CD8-positive, alpha-beta T cell (primary cell): ENCODE measurements at regions of chr15 and their contacts with region 1.

Region 1: DNA sequence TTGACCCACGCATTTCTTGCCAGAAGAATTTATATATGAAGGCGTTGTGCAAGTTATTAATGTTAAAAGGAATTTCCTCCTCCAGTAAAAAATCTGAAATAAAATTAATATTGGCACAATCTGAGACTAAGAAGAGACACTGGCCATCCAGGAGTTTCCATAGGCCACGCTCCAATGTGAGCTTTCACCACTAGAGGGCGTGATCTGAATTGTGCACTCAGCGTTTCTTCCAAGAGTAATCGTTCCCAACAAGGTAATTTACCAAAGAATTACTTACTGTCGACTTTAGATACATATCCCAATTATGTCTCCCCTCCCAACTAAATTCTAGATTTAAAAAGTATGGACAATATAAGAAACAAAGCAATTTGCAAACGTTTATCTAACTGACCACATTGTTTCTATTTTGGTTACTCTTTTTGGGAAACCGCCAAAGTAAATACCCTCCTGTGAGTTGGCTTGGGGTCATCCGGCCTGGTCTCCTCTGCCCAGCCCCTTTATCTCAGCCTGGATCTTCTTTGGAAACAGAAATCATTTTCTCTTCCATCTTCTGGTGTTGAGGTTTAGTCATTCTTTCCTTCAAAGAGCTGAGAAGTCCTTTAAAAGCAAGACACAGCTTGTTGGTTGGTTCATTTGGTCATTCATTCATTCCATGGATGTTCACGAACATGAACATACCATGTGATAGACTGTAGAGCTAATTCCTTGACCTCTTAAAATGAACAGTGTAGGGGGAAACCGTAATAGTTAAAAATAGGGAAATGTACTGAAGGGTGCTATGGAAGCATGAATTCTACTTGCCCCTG is 26.2 kb downstream of the POLR2M start:
- DNase-seq: peak in 8 of 9 experiments; percentile 17 to 61 (median 50)
- ATAC-seq: no peak
- H3K4me3 ChIP-seq: no peak overlapping the region
- H3K4me3 Mint-ChIP-seq: no peak overlapping the region
- H3K27ac ChIP-seq: no peak overlapping the region
- H3K27ac Mint-ChIP-seq: no peak overlapping the region
- H3K4me1 ChIP-seq: no peaks in the 10 kb centered on the region
- H3K4me1 Mint-ChIP-seq: peaks cover 8% of the 10 kb centered on the region
- H3K27me3 ChIP-seq: no peaks in the 10 kb centered on the region
- H3K27me3 Mint-ChIP-seq: no peaks in the 10 kb centered on the region
- CTCF ChIP-seq: peak; percentile 92

Region 2: GRCh38 chr15:57743424-57743823 is 10.7 kb after region 1 on chr15:
- CTCF ChIA-PET with region 1: interaction called, 48 read pairs
- POLR2A ChIA-PET with region 1: no interaction called
- intact Hi-C with region 1: no loop called
- DNase-seq: no peak
- ATAC-seq: no peak
- H3K4me3 ChIP-seq: no peak overlapping the region
- H3K4me3 Mint-ChIP-seq: no peak overlapping the region
- H3K27ac ChIP-seq: no peak overlapping the region
- H3K27ac Mint-ChIP-seq: no peak overlapping the region
- H3K4me1 ChIP-seq: no peaks in the 10 kb centered on the region
- H3K4me1 Mint-ChIP-seq: peaks cover 6% of the 10 kb centered on the region
- H3K27me3 ChIP-seq: no peaks in the 10 kb centered on the region
- H3K27me3 Mint-ChIP-seq: no peaks in the 10 kb centered on the region
- CTCF ChIP-seq: no peak